ENCODE measurements at regions of chr19 and their contacts with region 1.

Region 1: DNA sequence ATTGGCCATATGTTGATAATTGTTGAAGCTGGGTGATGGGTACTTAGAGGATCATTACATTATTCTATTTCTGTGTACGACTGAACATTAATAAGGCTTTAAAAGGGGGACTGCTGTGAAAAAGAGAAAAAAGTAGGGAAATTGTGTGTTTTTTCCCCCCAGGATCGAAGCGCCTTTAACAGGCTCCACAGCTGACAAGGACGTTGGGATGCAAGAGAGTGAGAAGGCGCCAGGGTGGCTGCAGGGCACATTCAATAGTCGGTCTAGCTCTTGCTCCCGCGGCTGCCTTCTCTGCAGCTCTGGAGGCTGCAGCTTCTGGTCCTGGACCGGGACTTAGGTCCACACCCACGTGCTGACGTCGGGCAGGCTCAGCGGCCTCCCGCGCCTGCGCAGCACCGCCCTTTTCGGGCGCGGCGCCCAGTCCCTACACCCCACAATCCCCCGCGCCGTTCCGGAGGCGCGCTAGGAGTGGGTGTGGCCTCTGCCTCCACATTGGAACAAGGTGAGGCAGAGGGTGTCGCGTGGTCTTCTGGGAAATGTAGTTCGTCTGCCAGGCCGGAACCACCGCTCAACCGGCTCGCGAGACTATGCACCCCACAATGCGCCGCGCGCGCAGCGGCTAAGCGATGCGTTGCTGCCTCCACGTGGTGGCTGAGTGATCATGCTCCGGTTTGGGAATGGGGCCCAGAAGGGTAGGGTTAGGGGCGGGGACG is 4.9 kb upstream of the LRFN3 start:
- DNase-seq: peak; percentile 99
- ATAC-seq: peak; percentile 99
- H3K4me3 ChIP-seq: peak overlapping the region; percentile 34
- H3K27ac ChIP-seq: peak overlapping the region; percentile 60
- H3K4me1 ChIP-seq: peaks cover 15% of the 10 kb centered on the region
- H3K27me3 ChIP-seq: no peaks in the 10 kb centered on the region
- CTCF ChIP-seq: peak; percentile 96 to 99 (median 96); a peak in 5 of 6 replicates
- EP300 ChIP-seq: no peak
- POLR2A ChIP-seq: peak; percentile 99
- RAD21 ChIP-seq: peak; percentile 100

Region 2: GRCh38 chr19:35545001-35545911 is 386.1 kb before region 1 on chr19 and contains the start of gene TMEM147:
- CTCF ChIA-PET with region 1: interaction called, 3 read pairs
- POLR2A ChIA-PET with region 1: no interaction called
- RAD21 ChIA-PET with region 1: no interaction called
- SMC1A ChIA-PET with region 1: no interaction called
- in situ Hi-C with region 1: no loop called
- intact Hi-C with region 1: loop called (anchors 5 kb)
- DNase-seq: no peak
- ATAC-seq: peak; percentile 95
- H3K4me3 ChIP-seq: peak within 1 kb of the TSS; percentile 77
- H3K27ac ChIP-seq: peak within 1 kb of the TSS; percentile 86
- H3K4me1 ChIP-seq: peaks cover 22% of the 10 kb centered on the region
- H3K27me3 ChIP-seq: no peaks in the 10 kb centered on the region
- CTCF ChIP-seq: no peak
- EP300 ChIP-seq: no peak; a peak in 1 of 4 replicates
- POLR2A ChIP-seq: peak; percentile 93
- RAD21 ChIP-seq: no peak
- polyA plus RNA-seq, gene TMEM147: 53.4 to 65.3 TPM

Region 3: GRCh38 chr19:35702223-35703012 is 228.9 kb before region 1 on chr19:
- CTCF ChIA-PET with region 1: interaction called, 4 read pairs
- POLR2A ChIA-PET with region 1: interaction called, 5 read pairs
- RAD21 ChIA-PET with region 1: interaction called, 13 read pairs
- SMC1A ChIA-PET with region 1: interaction called, 5 read pairs
- in situ Hi-C with region 1: no loop called
- intact Hi-C with region 1: no loop called
- DNase-seq: peak; percentile 96
- ATAC-seq: peak; percentile 98
- H3K4me3 ChIP-seq: peak overlapping the region; percentile 80
- H3K27ac ChIP-seq: peak overlapping the region; percentile 90
- H3K4me1 ChIP-seq: peaks cover 8% of the 10 kb centered on the region
- H3K27me3 ChIP-seq: no peaks in the 10 kb centered on the region
- CTCF ChIP-seq: no peak
- EP300 ChIP-seq: no peak
- POLR2A ChIP-seq: peak; percentile 93
- RAD21 ChIP-seq: no peak

Region 4: GRCh38 chr19:35748106-35749020 is 183.0 kb before region 1 on chr19 and contains the start of gene LIN37:
- CTCF ChIA-PET with region 1: interaction called, 7 read pairs
- POLR2A ChIA-PET with region 1: interaction called, 3 read pairs
- RAD21 ChIA-PET with region 1: interaction called, 10 read pairs
- SMC1A ChIA-PET with region 1: interaction called, 3 read pairs
- in situ Hi-C with region 1: no loop called
- intact Hi-C with region 1: loop called (anchors 2 kb)
- DNase-seq: peak; percentile 99
- ATAC-seq: peak; percentile 85
- H3K4me3 ChIP-seq: peak within 1 kb of the TSS; percentile 81
- H3K27ac ChIP-seq: peak within 1 kb of the TSS; percentile 59
- H3K4me1 ChIP-seq: peaks cover 19% of the 10 kb centered on the region
- H3K27me3 ChIP-seq: no peaks in the 10 kb centered on the region
- CTCF ChIP-seq: no peak
- EP300 ChIP-seq: no peak
- POLR2A ChIP-seq: peak; percentile 55
- RAD21 ChIP-seq: no peak
- polyA plus RNA-seq, gene LIN37: 0.69 to 3.3 TPM

Region 5: GRCh38 chr19:35889370-35890112 is 41.8 kb before region 1 on chr19:
- CTCF ChIA-PET with region 1: interaction called, 145 read pairs
- POLR2A ChIA-PET with region 1: interaction called, 12 read pairs
- RAD21 ChIA-PET with region 1: interaction called, 107 read pairs
- SMC1A ChIA-PET with region 1: interaction called, 90 read pairs
- in situ Hi-C with region 1: loop called (anchors 5 kb)
- intact Hi-C with region 1: no loop called
- DNase-seq: no peak
- ATAC-seq: no peak
- H3K4me3 ChIP-seq: no peak overlapping the region
- H3K27ac ChIP-seq: no peak overlapping the region
- H3K4me1 ChIP-seq: no peaks in the 10 kb centered on the region
- H3K27me3 ChIP-seq: no peaks in the 10 kb centered on the region
- CTCF ChIP-seq: no peak
- EP300 ChIP-seq: no peak
- POLR2A ChIP-seq: no peak
- RAD21 ChIP-seq: no peak

Region 6: DNA sequence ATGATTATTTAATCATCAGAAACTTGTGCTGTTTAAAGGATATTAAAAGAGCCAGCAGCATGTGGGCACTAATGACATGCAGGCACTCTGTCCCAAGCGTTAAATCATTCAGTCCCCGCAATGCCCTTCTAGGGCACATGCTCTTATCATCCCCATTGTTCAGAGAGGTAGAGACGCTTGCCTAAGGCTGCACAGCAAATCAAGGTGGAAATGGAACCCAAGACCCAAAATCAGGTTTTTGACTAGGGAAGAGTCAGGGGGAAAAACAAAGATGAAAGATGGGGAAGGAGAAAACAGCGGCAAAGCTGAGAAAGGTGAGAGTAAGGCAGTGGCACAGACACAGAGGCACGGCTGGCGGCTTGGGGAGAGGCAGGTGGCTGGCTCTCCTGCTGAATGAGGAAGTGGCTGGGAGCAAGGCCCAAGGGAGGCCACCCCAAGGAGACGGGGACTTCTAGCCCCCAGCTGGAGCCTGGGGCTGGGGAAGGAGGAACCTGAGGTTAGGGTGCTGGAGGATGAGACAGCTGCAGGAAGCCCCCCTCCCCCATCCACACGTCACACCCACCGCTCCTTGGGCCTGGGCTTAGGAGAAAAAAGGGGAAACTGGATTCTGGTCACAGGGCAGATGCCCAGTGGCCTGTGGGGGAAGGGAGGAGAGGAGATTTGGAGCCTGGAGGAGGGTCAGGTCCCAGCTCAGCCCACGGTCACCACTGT is 22.2 kb before region 1 on chr19:
- CTCF ChIA-PET with region 1: interaction called, 13 read pairs
- POLR2A ChIA-PET with region 1: interaction called, 48 read pairs
- RAD21 ChIA-PET with region 1: interaction called, 37 read pairs
- SMC1A ChIA-PET with region 1: interaction called, 68 read pairs
- in situ Hi-C with region 1: no loop called
- intact Hi-C with region 1: no loop called
- DNase-seq: no peak
- ATAC-seq: peak; percentile 78
- H3K4me3 ChIP-seq: no peak overlapping the region
- H3K27ac ChIP-seq: peak overlapping the region; percentile 88
- H3K4me1 ChIP-seq: peaks cover 55% of the 10 kb centered on the region
- H3K27me3 ChIP-seq: no peaks in the 10 kb centered on the region
- CTCF ChIP-seq: no peak
- EP300 ChIP-seq: peak; percentile 64 to 77; a peak in 3 of 4 replicates
- POLR2A ChIP-seq: peak; percentile 39; the same call in 1 of the 2 replicates
- RAD21 ChIP-seq: no peak

Region 7: DNA sequence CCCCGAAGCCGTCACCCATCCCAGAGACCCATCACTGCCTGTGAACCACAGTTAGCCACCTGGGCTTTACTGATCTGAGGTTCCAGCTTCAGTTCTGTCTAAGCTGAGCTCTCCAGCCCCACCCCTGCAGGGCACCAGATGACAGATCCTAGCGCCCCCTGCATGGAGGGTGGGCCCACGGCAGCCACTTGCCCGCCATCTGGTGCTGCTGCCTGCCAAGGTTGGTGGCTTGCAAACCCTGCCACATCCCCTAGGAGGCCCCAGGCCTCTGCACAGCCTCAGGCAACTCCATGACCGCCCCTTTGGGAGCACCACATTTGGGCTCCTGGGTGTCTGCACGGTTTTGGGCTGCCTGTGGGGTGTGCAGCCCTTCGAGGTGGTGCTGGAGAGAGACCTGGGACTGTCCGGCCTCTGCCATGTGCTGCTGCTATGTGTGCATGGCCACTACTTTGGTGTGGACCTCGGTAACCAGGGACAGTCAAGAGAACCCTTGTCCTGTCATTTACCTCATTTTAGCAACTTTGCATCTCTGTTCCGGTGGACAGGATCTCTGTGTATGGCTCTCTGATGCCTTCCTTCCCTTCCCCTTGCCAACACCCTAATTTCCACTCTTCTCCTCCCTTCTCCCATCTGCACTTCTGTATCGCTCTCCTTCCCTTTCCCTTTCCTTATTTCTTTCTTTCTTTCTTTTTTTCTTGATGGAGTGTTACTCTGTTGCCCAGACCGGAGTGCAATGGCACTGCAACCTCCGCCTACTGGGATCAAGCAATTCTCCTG is 46.3 kb after region 1 on chr19:
- CTCF ChIA-PET with region 1: no interaction called
- POLR2A ChIA-PET with region 1: no interaction called
- RAD21 ChIA-PET with region 1: no interaction called
- SMC1A ChIA-PET with region 1: no interaction called
- in situ Hi-C with region 1: no loop called
- intact Hi-C with region 1: no loop called
- DNase-seq: no peak
- ATAC-seq: peak; percentile 97
- H3K4me3 ChIP-seq: no peak overlapping the region
- H3K27ac ChIP-seq: no peak overlapping the region
- H3K4me1 ChIP-seq: no peaks in the 10 kb centered on the region
- H3K27me3 ChIP-seq: no peaks in the 10 kb centered on the region
- CTCF ChIP-seq: peak; percentile 36 to 40 (median 39)
- EP300 ChIP-seq: no peak
- POLR2A ChIP-seq: no peak
- RAD21 ChIP-seq: no peak